BJ (cell line): ENCODE measurements at regions of chr12 and their contacts with region 1.

Region 1: DNA sequence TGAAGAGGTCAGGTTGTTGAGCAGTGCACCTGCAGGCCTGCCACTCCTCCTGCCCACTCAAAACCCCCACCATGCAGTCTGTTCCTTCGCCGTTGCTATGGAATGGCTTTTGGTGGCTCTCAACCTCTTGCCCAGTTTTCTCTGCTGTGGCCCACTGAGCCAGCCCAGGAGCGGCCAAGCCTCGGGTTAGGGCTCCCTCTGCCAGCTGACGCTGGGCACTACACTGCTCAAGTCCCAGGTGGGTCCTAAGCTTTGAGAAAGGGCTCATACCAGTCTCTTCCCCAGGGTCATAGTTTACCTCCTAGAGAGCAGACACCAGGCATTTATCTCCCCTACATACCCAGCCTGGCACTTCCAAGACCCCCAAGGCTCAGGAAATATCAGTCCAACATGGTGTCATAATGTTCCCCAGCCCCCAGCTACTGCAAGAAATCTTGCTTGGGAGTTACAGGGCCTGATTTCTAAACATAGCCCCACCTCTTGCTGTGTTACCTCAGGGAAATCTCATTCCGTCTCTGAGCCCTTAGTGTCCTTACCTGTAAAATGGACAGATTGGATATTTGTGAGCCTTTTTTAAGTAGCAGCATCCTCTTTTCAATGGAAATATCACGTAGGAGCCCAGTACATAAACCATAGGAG is 59.4 kb downstream of the TSPAN11 start:
- DNase-seq: no peak
- H3K4me3 ChIP-seq: no peak overlapping the region
- H3K27me3 ChIP-seq: 0 out of 2 replicates have a peak, but pooled peaks cover 1% of the 10 kb centered on the region
- CTCF ChIP-seq: peak; percentile 92

Region 2: GRCh38 chr12:30853561-30854133 is 132.3 kb before region 1 on chr12:
- CTCF ChIA-PET with region 1: interaction called, 324 read pairs
- POLR2A ChIA-PET with region 1: no interaction called
- DNase-seq: no peak
- H3K4me3 ChIP-seq: no peak overlapping the region
- H3K27me3 ChIP-seq: no peaks in the 10 kb centered on the region
- CTCF ChIP-seq: no peak

Region 3: GRCh38 chr12:30882706-30883105 is 103.2 kb before region 1 on chr12:
- CTCF ChIA-PET with region 1: interaction called, 38 read pairs
- POLR2A ChIA-PET with region 1: no interaction called
- DNase-seq: no peak
- H3K4me3 ChIP-seq: no peak overlapping the region
- H3K27me3 ChIP-seq: no peaks in the 10 kb centered on the region
- CTCF ChIP-seq: 0 out of 2 replicates have a peak, but pooled peaks have one; percentile 14

Region 4: DNA sequence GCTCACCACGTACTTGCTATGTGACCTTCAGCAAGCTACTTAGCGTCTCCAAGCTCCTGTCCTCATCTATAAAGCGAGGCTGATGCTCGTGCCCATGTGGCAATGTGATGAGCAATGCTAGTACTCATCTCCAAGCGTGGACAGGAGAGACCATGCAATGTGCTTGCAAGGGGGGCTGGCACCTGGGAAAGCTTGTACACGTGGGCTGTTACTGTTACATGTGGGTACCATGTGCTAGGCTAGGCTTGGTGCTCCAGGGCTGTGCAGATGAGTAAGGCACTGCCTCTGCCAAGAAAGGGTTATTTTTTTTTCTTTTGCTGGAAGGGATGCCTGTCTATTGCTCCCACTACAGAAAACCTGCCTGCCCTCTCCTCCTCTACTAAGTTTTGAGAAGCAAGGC is 12.8 kb before region 1 on chr12:
- CTCF ChIA-PET with region 1: interaction called, 42 read pairs
- POLR2A ChIA-PET with region 1: no interaction called
- DNase-seq: no peak
- H3K4me3 ChIP-seq: no peak overlapping the region
- H3K27me3 ChIP-seq: peaks cover 7% of the 10 kb centered on the region
- CTCF ChIP-seq: no peak

Region 5: GRCh38 chr12:30996255-30996654 is 10.3 kb after region 1 on chr12:
- CTCF ChIA-PET with region 1: interaction called, 16 read pairs
- POLR2A ChIA-PET with region 1: no interaction called
- DNase-seq: no peak
- H3K4me3 ChIP-seq: no peak overlapping the region
- H3K27me3 ChIP-seq: no peaks in the 10 kb centered on the region
- CTCF ChIP-seq: no peak